Posterior cingulate gyrus (tissue), 11 donors: ENCODE measurements at regions of chr3 and their contacts with region 1.

Region 1: GRCh38 chr3:152309535-152310307 is 41.0 kb downstream of the MBNL1 start:
- DNase-seq: no peak

Region 2: GRCh38 chr3:152241142-152242017 is 68.3 kb before region 1 on chr3:
- intact Hi-C with region 1: no loop called
- DNase-seq: no peak

Region 3: DNA sequence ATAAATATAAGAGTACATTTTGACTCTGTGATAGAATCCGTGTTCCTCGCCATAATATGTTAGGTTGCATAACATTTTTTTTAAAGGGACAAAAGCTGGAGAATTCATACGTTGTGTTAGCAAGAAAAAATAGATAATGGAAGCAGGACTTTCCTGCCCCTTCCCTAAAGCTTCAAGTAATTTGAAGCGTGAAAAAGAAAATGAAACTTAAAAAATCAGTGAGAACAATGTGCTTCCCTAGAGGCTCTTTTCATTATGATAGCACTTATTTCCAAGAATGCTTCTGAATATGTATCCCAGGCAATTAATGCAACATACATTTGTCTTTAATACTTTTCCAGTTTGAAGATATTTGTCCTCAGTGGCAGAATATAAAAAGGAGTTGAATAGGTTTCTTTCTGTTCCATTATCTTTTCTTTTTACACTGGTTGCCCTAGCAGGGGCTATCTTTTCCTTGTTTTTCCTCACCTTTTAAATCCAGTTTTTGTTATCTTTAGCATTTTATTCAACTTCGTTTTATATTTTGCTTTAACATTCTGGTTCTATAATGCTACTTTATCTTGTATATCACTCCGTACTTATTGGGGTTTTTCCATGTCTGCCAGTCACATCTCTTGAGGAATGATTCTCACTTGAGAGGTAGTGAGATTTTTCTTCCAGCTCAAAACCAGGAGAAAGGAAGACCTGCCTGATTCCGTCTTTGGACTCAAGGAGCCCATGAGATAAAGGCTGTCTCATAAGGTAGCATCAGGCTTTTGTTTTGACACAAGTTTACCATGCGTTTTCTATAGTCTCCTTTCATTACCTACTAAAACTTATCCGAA is 72.8 kb after region 1 on chr3:
- intact Hi-C with region 1: loop called (anchors 10 kb)
- DNase-seq: no peak